ENCODE measurements at regions of chr3 and their contacts with region 1.

Region 1: GRCh38 chr3:15367059-15367458 is 34.7 kb upstream of the SH3BP5 start:
- DNase-seq: peak in 1 of 2 experiments; percentile 35
- H3K4me3 ChIP-seq: no peak overlapping the region
- H3K27ac ChIP-seq: no peak overlapping the region
- H3K4me1 ChIP-seq: peaks cover 7% of the 10 kb centered on the region
- H3K27me3 ChIP-seq: no peaks in the 10 kb centered on the region
- CTCF ChIP-seq: no peak

Region 2: DNA sequence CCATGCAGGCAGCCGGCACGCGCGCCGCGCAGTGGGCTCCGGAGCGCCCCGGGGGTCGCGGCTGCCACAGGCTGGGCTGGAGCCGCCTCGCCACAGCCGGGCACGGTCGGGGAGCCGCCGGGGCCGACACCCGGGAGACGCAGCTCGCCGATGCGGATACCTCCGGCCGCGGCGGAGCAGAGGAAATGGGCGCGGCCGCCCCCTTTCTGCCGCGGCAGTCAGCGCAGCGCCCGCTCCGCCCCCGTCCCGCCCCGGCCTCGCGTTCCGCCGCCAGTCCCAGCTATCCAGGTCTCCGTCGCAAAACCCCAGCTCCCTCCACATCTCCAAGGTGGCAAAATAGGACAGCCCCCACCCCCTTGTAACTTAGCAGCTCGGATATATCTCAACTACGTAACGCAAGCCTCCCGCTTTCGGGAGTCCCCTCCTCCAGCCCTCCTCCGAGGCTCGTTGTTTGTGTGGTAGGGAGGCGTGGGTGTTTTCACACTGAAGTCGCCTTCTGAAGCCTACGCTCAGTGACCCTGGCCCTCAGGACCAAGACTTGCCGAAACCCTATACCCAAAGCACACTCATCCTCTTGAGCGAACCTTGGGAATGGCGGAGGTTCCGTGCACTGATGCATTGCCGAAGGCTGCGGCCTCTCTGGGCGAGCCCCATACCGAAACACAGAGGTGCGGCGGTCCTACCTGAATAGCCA is 34.5 kb before region 1 on chr3 and contains the start of gene SH3BP5:
- CTCF ChIA-PET with region 1: no interaction called
- POLR2A ChIA-PET with region 1: interaction called, 11 read pairs
- intact Hi-C with region 1: no loop called
- DNase-seq: peak; percentile 36 to 76
- H3K4me3 ChIP-seq: peak within 1 kb of the TSS; percentile 95
- H3K27ac ChIP-seq: peak within 1 kb of the TSS; percentile 43; the same call in 1 of the 2 replicates
- H3K4me1 ChIP-seq: peaks cover 68% of the 10 kb centered on the region
- H3K27me3 ChIP-seq: no peaks in the 10 kb centered on the region
- CTCF ChIP-seq: peak; percentile 69
- total RNA-seq, gene SH3BP5: 31.6 and 39.3 TPM in 2 replicates